AG04449 (cell line): ENCODE measurements at regions of chr6 and their contacts with region 1.

Region 1: GRCh38 chr6:100105138-100105753 is 111.2 kb upstream of the MCHR2 start:
- DNase-seq: no peak
- H3K4me3 ChIP-seq: no peak overlapping the region
- CTCF ChIP-seq: no peak

Region 2: DNA sequence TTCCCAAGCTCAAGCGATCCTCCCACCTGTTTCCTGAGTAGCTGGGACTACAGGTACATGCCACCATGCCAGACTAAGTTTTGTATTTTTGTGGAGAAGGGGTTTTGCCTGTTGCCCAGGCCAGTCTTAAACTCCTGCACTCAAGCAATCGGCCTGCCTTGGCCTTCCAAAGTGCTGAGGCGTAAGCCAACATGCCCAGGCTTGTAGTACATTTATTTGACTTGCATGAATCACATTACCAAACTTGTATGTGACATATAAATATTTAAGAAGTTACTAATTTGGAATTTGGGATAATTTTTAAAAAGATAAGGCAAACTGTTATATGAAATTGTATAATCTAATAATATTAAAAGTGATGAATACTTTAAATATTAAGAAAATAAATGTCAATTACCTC is 268.8 kb before region 1 on chr6:
- CTCF ChIA-PET with region 1: no interaction called
- POLR2A ChIA-PET with region 1: no interaction called
- DNase-seq: no peak
- H3K4me3 ChIP-seq: no peak overlapping the region
- CTCF ChIP-seq: no peak

Region 3: DNA sequence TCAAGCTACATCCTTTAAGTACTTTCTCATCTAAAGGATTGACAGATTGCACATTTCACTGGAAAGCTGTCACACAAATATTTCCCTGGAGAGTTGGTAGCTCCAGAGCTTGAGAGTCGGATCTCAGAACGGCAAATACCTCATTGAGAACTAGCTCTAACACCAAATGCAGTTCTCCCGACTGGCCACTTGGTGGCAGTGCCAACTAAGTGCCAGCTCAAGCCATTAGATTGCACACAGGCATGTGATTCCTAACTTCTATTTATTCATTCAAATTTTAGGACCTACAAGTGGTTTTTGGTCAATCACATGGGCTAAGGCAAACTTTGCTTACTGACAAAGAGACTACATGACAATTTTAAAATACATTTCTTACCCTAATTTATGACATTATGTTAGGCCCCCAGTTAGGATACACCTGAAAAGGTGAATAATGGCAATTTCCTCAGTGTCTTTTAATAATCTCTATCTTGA is 103.3 kb before region 1 on chr6:
- CTCF ChIA-PET with region 1: interaction called, 256 read pairs
- POLR2A ChIA-PET with region 1: no interaction called
- DNase-seq: peak; percentile 16
- H3K4me3 ChIP-seq: no peak overlapping the region
- CTCF ChIP-seq: peak; percentile 88

Region 4: GRCh38 chr6:100126790-100127484 is 21.7 kb after region 1 on chr6:
- CTCF ChIA-PET with region 1: interaction called, 10 read pairs
- POLR2A ChIA-PET with region 1: no interaction called
- DNase-seq: no peak
- H3K4me3 ChIP-seq: no peak overlapping the region
- CTCF ChIP-seq: no peak

Region 5: GRCh38 chr6:100152201-100152600 is 47.0 kb after region 1 on chr6:
- CTCF ChIA-PET with region 1: no interaction called
- POLR2A ChIA-PET with region 1: no interaction called
- DNase-seq: no peak
- H3K4me3 ChIP-seq: no peak overlapping the region
- CTCF ChIP-seq: no peak

Region 6: DNA sequence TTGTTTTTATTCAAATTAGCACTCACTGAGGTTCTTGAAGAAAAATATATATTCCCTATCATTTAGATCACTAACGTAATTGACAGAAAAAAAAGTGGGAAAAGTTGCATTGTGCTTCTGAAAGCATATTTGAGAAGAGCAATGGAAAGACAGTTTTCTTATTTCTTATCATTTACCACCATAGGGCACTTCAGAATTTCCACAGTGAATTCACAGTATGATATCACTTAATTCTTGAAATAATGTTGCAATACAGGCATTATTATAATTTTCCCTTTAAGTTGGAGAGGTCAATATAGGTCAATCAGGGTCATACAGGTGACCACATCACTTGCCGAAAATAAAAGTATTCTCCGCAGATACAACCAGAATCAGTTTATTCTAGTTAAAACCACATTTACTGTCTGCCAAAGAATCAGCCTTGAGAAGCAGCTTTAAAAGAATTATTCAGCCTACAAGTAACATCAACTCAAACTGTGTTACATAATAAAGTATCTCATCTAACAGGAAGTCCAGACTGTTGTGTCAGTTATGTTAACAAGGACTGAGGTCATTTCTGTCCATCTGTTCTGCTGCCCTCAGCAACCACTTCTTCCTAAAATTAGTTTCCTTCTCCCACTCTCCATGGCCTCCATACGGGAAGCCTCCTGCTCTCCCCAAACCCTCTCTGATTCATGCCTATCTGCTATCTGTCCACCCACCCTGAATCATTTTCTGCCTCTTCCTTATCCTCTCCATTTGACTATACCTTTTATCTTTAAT is 238.3 kb after region 1 on chr6:
- CTCF ChIA-PET with region 1: no interaction called
- POLR2A ChIA-PET with region 1: no interaction called
- DNase-seq: no peak
- H3K4me3 ChIP-seq: no peak overlapping the region
- CTCF ChIP-seq: no peak

Region 7: DNA sequence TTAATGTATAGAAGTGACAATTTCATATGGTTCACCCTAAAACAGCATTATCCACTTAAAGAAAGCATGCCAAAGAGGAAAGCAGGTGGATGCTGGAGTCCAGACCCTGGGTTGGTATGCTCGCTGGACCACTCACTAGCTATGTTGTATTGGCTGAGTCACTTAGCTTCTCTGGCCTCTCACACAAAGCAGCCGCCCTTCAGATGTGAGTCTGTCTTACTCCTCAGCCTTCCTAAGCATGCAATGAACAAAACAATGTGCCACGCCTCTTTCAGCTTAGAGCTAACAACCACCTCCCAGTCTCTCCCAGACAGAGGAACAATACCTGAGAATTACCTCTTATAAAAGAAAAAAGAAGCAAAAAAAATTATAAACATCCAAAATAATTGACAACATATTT is 330.1 kb after region 1 on chr6:
- CTCF ChIA-PET with region 1: no interaction called
- POLR2A ChIA-PET with region 1: no interaction called
- DNase-seq: no peak
- H3K4me3 ChIP-seq: no peak overlapping the region
- CTCF ChIP-seq: no peak

Region 8: GRCh38 chr6:100472674-100473073 is 367.4 kb after region 1 on chr6:
- CTCF ChIA-PET with region 1: interaction called, 180 read pairs
- POLR2A ChIA-PET with region 1: no interaction called
- DNase-seq: no peak
- H3K4me3 ChIP-seq: no peak overlapping the region
- CTCF ChIP-seq: no peak

Region 9: DNA sequence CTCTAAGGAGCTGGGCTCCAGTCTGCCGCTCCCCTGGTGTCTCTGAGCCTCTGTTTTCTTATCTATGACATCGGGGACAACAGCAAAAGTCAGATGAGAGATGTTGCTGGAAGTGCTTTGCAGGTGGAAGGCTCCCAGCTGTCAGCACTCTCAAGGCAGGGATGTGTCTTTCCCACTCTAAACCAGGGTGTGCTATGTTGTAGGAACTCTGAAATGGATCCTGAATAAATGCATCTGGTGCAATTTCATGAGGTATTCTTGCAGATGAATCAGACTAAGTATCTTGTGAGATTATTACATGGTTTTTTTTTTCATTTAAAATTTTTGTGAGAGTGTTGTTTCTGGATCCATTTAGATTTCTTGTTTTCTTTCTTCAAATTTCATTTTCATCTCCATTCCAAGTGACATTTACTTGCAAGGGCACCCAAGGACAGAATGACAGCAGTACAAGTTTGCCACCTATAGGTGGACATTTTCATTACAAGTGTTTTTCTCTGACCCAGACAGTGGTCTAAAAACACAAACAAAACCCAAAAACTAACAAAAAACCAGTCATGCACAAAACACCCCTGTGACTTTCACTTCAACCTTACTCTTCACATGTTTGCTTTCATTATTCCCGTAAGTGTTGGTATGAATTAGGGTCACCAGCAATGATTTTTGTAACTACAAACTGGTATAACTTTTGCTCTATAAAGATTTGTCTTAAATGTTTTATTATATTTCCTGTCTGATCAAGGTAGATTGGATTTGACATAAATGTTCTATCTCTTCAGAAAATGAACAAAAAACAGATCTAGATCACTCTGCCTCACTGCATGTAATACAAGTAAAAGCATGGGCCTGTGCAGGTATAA is 374.2 kb after region 1 on chr6:
- CTCF ChIA-PET with region 1: interaction called, 180 read pairs
- POLR2A ChIA-PET with region 1: no interaction called
- DNase-seq: no peak
- H3K4me3 ChIP-seq: no peak overlapping the region
- CTCF ChIP-seq: peak; percentile 36

Region 10: DNA sequence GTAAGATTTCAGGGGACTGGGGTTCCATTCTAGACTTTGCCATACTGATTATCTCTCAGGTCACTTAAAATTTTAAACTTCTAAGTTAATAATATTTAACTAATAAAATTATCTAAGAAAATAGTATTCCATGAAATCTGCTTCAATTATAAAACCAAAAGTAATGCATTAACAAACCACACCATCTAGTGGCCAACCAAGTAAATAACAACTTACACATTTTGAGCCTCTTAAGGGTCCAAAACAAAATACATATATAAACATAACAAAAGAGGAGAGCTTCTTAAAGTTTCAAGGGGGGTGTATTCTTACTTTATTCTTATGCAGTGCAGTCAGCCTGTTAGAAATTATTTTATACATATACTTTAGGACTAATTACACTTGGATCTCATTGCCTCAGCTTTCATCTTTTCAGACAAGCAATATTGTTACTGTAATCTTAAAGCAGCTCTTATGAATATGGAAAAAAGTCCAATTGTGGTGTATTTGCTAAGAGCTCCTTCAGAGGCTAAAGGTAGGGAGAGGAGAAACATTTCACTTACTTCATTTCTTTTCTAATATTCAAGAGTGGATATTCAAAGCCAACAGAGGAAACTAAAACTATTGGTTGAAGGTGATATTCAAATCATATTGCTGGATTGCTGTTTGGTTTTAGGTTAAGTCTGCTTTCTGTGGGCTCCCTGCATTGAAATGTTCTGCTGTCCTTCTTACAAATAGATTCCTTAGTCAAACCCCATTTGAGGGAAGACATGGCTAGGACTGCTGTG is 559.2 kb after region 1 on chr6:
- CTCF ChIA-PET with region 1: interaction called, 59 read pairs
- POLR2A ChIA-PET with region 1: no interaction called
- DNase-seq: no peak
- H3K4me3 ChIP-seq: no peak overlapping the region
- CTCF ChIP-seq: peak; percentile 37